Keratinocyte (primary cell): ENCODE measurements at regions of chr3 and their contacts with region 1.

Region 1: GRCh38 chr3:155701882-155702465 is 42.9 kb downstream of the PLCH1 start:
- DNase-seq: peak; percentile 1
- H3K4me3 ChIP-seq: no peak overlapping the region
- H3K27ac ChIP-seq: no peak overlapping the region
- H3K4me1 ChIP-seq: no peaks in the 10 kb centered on the region
- H3K27me3 ChIP-seq: no peaks in the 10 kb centered on the region
- CTCF ChIP-seq: peak in 1 of 3 experiments; percentile 42

Region 2: DNA sequence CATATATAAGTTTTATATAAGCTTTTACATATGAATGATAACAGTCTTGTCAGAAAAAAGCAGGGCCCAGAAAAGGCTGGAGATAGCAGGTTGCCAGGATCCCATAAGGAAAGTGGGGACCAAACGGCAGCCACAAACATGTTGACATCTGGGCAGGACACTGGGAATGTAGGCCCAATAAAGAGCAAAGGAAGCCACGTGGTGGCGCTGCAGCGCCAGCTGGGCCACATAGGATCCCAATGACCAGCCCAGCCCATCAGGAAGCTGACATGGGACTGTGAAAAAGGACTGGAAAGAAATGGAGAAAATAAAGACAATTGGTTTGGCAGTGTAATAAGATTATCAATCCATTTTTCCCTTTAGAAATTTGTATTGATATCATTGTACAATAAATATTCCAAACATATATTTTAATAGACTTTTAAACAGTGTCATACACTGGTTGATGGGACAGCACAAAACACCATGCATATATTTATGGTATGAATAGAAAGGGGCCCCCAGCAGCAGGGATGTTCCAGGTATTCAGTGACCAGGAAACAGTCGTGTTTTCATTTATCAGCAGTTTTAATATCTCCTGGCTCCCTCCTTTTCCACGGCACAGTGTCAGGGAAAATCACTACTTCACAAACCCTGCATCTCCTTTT is 319.5 kb before region 1 on chr3:
- dilution Hi-C with region 1: loop called (anchors 25 kb)
- DNase-seq: no peak
- H3K4me3 ChIP-seq: no peak overlapping the region
- H3K27ac ChIP-seq: no peak overlapping the region
- H3K4me1 ChIP-seq: peaks cover under 1% of the 10 kb centered on the region
- H3K27me3 ChIP-seq: no peaks in the 10 kb centered on the region
- CTCF ChIP-seq: peak; percentile 81 to 91 (median 85)